ENCODE measurements at regions of chr19 and their contacts with region 1.

Region 1: DNA sequence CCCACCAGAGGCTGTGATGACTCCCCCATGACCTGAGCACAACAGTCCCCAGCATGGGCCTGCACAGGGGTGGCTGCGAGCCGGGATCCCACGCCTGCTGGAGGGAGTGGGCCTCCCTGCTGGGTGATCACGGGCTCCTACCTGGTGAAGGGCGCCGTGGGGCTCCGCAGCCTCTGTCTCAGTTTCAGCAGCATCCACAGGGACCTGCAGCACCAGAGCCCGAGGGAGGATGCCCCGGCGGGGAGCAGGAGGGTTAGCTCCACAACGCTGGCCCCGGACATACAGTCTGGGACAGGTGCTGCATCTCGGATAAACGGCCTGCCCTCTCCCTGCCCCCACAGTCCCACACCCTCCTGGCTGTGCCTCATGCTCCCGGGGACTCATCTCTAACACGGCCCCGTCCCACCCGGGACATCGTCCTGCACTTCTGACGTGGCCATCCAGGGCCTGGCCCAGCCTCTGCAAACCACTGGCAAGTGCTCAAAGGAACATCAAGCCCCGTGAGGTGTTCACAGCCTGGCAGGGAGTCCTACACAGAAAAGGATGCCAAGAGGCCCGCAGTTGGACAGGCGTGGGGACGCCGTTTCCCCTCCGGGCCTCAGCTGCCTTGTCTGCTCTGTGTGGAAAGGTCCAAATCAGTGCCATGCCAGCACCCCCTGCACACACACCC is 10.5 kb downstream of the PEX11G start:
- DNase-seq: no peak
- H3K4me3 ChIP-seq: no peak overlapping the region
- H3K27ac ChIP-seq: no peak overlapping the region
- H3K4me1 ChIP-seq: peaks cover 29% of the 10 kb centered on the region
- H3K27me3 ChIP-seq: no peaks in the 10 kb centered on the region
- CTCF ChIP-seq: no peak

Region 2: DNA sequence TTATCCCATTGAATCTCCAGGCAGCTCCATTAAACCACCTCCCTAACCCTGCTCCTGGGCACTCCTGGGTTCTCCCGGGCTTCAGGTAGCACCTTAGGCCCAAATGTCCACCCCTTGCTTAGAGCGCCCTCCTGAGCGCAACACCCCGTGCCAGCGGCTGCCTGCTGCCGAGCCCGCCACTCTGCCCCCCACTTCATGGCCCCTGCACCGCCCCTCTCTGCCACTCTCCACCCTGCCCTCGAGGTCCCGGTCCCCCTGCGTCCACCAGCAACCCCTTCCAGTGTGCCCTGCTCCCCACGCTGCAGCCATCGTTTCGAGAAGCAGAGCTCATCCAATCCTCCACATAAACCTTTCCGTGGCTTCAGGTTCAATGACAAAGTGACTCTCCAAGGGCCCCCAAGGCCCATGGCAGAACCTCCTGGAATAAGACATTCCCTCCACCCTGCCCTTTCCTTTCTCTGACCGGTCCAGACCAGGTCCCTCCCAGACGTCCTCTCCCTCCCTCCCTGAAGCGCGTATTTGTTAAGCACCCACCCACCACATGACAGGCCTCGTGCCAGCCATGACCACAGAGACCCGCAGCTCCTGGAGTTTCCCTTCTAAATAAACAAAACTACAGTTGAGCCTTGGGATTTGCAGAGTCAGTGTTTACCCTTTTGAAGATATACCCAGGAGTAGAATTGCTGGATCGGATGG is 63.0 kb before region 1 on chr19:
- CTCF ChIA-PET with region 1: no interaction called
- POLR2A ChIA-PET with region 1: no interaction called
- intact Hi-C with region 1: no loop called
- DNase-seq: no peak
- H3K4me3 ChIP-seq: no peak overlapping the region
- H3K27ac ChIP-seq: no peak overlapping the region
- H3K4me1 ChIP-seq: peaks cover 17% of the 10 kb centered on the region
- H3K27me3 ChIP-seq: no peaks in the 10 kb centered on the region
- CTCF ChIP-seq: no peak

Region 3: DNA sequence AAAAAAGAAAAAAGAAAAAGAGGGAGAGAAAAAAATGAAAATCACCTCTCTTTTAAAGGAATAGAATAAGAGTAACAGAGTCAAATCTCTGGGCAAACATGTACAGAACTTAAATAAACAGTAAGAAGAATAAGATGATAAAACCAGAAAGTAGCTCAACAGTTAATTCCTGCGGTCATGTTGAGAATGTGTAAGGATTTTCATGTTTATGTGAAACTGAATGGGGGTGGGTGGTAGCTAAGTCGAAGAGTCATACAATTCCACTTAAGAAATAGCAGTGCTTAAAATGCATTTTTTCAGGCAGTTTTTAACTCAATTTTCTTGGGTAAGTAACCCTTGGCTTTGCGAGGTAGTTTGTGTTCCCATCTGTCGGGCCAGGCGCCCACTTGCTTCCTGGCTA is 50.4 kb before region 1 on chr19:
- CTCF ChIA-PET with region 1: interaction called, 10 read pairs
- POLR2A ChIA-PET with region 1: interaction called, 4 read pairs
- intact Hi-C with region 1: no loop called
- DNase-seq: no peak
- H3K4me3 ChIP-seq: no peak overlapping the region
- H3K27ac ChIP-seq: no peak overlapping the region
- H3K4me1 ChIP-seq: peaks cover 37% of the 10 kb centered on the region
- H3K27me3 ChIP-seq: no peaks in the 10 kb centered on the region
- CTCF ChIP-seq: no peak

Region 4: GRCh38 chr19:7497292-7497691 is 19.0 kb after region 1 on chr19:
- CTCF ChIA-PET with region 1: no interaction called
- POLR2A ChIA-PET with region 1: no interaction called
- intact Hi-C with region 1: no loop called
- DNase-seq: no peak
- H3K4me3 ChIP-seq: no peak overlapping the region
- H3K27ac ChIP-seq: no peak overlapping the region
- H3K4me1 ChIP-seq: peaks cover 18% of the 10 kb centered on the region
- H3K27me3 ChIP-seq: no peaks in the 10 kb centered on the region
- CTCF ChIP-seq: peak; percentile 62